A673 (cell line): ENCODE measurements at regions of chr3 and their contacts with region 1.

Region 1: DNA sequence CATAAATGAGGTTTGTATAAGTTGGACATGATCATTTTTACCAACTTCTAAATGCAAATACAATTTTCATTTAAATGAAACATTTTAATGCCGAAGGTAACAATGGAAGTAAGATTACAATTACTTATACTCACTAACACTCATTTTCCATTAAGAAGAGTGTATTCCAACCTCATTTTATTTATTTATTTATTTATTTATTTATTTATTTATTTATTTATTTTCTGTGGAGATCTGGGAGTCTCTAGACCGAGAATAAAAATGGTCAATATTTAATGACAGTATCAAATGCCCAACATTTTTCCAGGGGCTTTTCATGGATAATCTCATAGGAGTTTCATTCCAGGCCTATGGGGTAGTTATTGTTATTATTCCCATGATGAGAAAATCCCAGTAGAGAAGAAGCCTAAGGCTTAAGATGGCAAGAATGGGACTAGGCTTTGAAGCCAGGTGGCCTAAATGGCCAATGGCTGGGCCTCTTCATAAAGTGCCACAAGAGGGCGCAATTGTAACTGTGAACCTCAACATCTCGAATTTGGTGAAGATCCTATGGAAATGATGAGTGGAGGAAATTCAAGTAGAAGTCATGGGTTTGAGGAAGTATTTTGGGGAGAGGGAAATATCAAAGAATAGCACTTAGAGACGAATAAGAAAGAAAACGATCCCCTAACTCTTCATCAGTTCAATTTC is 21.3 kb downstream of the VGLL3 start:
- DNase-seq: peak; percentile 83
- H3K4me3 ChIP-seq: no peak overlapping the region
- H3K27ac ChIP-seq: no peak overlapping the region
- H3K4me1 ChIP-seq: peaks cover 15% of the 10 kb centered on the region
- H3K27me3 ChIP-seq: no peaks in the 10 kb centered on the region
- CTCF ChIP-seq: peak; percentile 93

Region 2: GRCh38 chr3:86245360-86245759 is 724.3 kb before region 1 on chr3:
- CTCF ChIA-PET with region 1: no interaction called
- POLR2A ChIA-PET with region 1: no interaction called
- intact Hi-C with region 1: no loop called
- DNase-seq: peak; percentile 19
- H3K4me3 ChIP-seq: no peak overlapping the region
- H3K27ac ChIP-seq: no peak overlapping the region
- H3K4me1 ChIP-seq: no peaks in the 10 kb centered on the region
- H3K27me3 ChIP-seq: no peaks in the 10 kb centered on the region
- CTCF ChIP-seq: peak; percentile 49

Region 3: GRCh38 chr3:86785386-86785785 is 184.3 kb before region 1 on chr3:
- CTCF ChIA-PET with region 1: no interaction called
- POLR2A ChIA-PET with region 1: no interaction called
- intact Hi-C with region 1: loop called (anchors 5 kb)
- DNase-seq: peak; percentile 28
- H3K4me3 ChIP-seq: no peak overlapping the region
- H3K27ac ChIP-seq: no peak overlapping the region
- H3K4me1 ChIP-seq: peaks cover 8% of the 10 kb centered on the region
- H3K27me3 ChIP-seq: no peaks in the 10 kb centered on the region
- CTCF ChIP-seq: peak; percentile 54

Region 4: GRCh38 chr3:86929046-86929803 is 40.4 kb before region 1 on chr3:
- CTCF ChIA-PET with region 1: no interaction called
- POLR2A ChIA-PET with region 1: no interaction called
- intact Hi-C with region 1: no loop called
- DNase-seq: no peak
- H3K4me3 ChIP-seq: no peak overlapping the region
- H3K27ac ChIP-seq: no peak overlapping the region
- H3K4me1 ChIP-seq: no peaks in the 10 kb centered on the region
- H3K27me3 ChIP-seq: no peaks in the 10 kb centered on the region
- CTCF ChIP-seq: no peak

Region 5: DNA sequence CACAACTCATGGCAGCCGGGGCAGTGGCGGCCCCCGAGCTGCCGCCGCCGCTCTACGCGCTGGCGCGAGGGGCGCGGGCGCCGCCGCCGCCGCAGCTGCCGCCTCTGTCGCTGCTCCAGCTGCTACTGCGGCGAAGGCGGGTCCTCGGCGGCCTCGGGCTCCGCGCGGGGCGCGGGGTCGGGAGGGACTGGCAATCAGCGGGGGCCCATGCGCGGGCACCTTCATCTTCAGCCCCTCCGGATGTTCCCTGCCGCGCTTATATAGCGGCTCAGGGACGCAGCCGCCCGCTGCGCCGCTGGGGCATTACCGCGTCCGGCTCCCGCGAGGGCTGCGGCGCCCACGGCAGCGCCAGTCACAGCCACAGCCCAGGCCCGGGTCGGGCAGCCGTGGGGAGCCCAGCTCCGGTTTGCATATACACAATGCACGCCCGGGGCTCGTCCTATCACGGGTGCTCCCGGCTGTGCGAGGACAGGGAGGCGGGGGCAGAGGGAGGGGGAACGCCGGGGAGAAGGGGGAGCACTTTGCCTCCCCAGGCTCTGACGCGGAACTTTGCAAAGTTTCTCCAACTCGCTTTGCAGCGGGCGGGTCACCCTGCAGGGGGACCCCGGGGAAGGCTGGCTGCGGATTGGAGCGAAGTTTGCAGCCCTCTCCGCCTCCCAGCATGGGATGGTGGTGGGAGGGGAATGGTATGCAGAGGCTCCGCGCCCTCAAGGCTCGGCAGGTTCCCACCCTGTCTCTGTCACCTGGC is 21.3 kb after region 1 on chr3 and contains the start of gene VGLL3:
- CTCF ChIA-PET with region 1: no interaction called
- POLR2A ChIA-PET with region 1: interaction called, 10 read pairs
- intact Hi-C with region 1: no loop called
- DNase-seq: peak; percentile 97
- H3K4me3 ChIP-seq: peak within 1 kb of the TSS; percentile 86
- H3K27ac ChIP-seq: peak within 1 kb of the TSS; percentile 85
- H3K4me1 ChIP-seq: peaks cover 53% of the 10 kb centered on the region
- H3K27me3 ChIP-seq: no peaks in the 10 kb centered on the region
- CTCF ChIP-seq: 0 out of 2 replicates have a peak, but pooled peaks have one; percentile 28
- total RNA-seq, gene VGLL3: 20.7 and 26.8 TPM in 2 replicates

Region 6: GRCh38 chr3:87082796-87083440 is 113.3 kb after region 1 on chr3:
- CTCF ChIA-PET with region 1: interaction called, 6 read pairs
- POLR2A ChIA-PET with region 1: no interaction called
- intact Hi-C with region 1: loop called (anchors 2 kb)
- DNase-seq: peak; percentile 75
- H3K4me3 ChIP-seq: no peak overlapping the region
- H3K27ac ChIP-seq: no peak overlapping the region
- H3K4me1 ChIP-seq: no peaks in the 10 kb centered on the region
- H3K27me3 ChIP-seq: no peaks in the 10 kb centered on the region
- CTCF ChIP-seq: peak; percentile 73

Region 7: GRCh38 chr3:87167628-87168456 is 198.2 kb after region 1 on chr3:
- CTCF ChIA-PET with region 1: no interaction called
- POLR2A ChIA-PET with region 1: interaction called, 3 read pairs
- intact Hi-C with region 1: loop called (anchors 5 kb)
- DNase-seq: peak; percentile 73
- H3K4me3 ChIP-seq: peak overlapping the region; percentile 42
- H3K27ac ChIP-seq: no peak overlapping the region
- H3K4me1 ChIP-seq: no peaks in the 10 kb centered on the region
- H3K27me3 ChIP-seq: no peaks in the 10 kb centered on the region
- CTCF ChIP-seq: peak; percentile 85